BJ (cell line): ENCODE measurements at regions of chr2 and their contacts with region 1.

Region 1: GRCh38 chr2:176096986-176097819 is 2.4 kb upstream of the HOXD12 start:
- DNase-seq: no peak
- H3K4me3 ChIP-seq: peak overlapping the region; percentile 52
- H3K27me3 ChIP-seq: peaks cover 27% of the 10 kb centered on the region
- CTCF ChIP-seq: peak; percentile 94

Region 2: GRCh38 chr2:175251425-175252041 is 845.7 kb before region 1 on chr2:
- CTCF ChIA-PET with region 1: interaction called, 39 read pairs
- POLR2A ChIA-PET with region 1: no interaction called
- DNase-seq: no peak
- H3K4me3 ChIP-seq: no peak overlapping the region
- H3K27me3 ChIP-seq: peaks cover 7% of the 10 kb centered on the region
- CTCF ChIP-seq: peak; percentile 68

Region 3: GRCh38 chr2:175366815-175367214 is 730.4 kb before region 1 on chr2:
- CTCF ChIA-PET with region 1: interaction called, 43 read pairs
- POLR2A ChIA-PET with region 1: no interaction called
- DNase-seq: no peak
- H3K4me3 ChIP-seq: no peak overlapping the region
- H3K27me3 ChIP-seq: no peaks in the 10 kb centered on the region; the same call in 1 of the 2 replicates
- CTCF ChIP-seq: peak; percentile 82

Region 4: GRCh38 chr2:175844169-175844568 is 253.0 kb before region 1 on chr2:
- CTCF ChIA-PET with region 1: no interaction called
- POLR2A ChIA-PET with region 1: no interaction called
- DNase-seq: no peak
- H3K4me3 ChIP-seq: no peak overlapping the region
- H3K27me3 ChIP-seq: no peaks in the 10 kb centered on the region
- CTCF ChIP-seq: no peak

Region 5: DNA sequence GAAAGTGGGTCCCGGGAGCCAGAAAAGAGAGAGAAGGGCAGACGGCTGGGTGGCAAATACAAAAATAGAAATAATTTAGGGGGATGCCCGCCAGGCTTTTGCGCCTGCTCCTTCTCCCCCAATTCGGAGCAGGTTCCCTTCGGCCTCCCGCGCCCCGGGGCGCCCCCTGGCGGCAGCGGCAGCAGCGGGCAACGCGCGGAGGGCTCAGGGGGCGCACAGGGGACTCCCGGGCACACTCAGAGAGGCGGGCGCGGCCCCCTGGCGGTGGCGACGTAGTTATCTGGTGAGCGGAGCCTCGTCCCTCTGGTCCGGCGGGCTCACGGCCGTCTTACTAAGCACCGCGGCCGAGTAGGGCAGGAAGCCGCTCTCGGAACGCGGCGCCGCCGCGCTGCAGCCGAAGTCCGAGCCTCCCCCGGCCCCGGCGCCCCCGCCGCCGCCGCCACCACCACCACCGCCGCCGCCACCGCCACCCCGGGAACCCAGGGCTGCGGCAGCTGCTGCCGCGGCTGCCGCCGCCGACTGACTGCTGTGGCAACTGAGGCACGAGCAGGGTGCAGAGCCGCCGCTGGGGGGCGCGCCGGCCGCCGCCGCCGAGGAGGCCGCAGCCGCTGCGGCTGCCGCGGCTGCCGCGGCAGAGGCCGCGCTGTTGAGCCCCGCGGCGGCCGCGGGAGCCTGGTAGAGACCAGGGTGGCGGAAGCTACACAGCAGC is 17.2 kb before region 1 on chr2:
- CTCF ChIA-PET with region 1: interaction called, 24 read pairs
- POLR2A ChIA-PET with region 1: no interaction called
- DNase-seq: no peak
- H3K4me3 ChIP-seq: peak overlapping the region; percentile 23
- H3K27me3 ChIP-seq: peaks cover 49% of the 10 kb centered on the region
- CTCF ChIP-seq: peak; percentile 63

Region 6: DNA sequence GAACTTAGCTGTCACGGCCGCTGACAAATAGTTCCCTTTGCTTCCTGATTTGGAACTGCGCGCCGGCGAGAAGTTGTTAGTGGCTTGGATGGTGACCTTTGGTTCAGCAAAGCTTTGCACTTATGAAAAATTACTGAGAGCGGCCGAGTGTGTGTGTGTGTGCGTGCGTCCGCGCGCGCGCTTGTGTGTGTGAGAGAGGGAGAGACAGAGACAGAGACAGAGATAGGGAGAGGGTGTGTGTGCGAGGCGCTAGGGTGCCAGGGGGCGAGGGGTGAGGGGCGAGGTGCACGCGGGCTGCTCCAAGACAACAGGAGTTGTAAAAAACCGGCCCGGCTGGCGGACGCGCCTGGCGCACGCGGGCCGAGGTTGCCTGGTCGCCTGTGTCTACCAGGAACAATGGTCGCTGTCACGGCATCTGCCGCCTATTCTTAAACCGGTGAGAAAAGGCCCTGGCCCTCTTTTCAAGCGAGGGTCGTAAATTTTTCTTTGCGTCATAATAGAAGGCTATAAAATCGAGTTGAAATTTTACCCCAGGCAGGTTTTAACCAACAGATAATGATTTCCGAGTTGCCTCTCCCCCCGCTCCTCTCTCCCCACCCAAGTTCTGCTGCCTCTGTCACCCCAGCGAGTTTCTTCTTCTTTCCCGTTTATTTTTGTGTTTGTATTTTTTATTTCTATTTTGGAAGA is 60.4 kb after region 1 on chr2:
- CTCF ChIA-PET with region 1: no interaction called
- POLR2A ChIA-PET with region 1: no interaction called
- DNase-seq: no peak
- H3K4me3 ChIP-seq: no peak overlapping the region
- H3K27me3 ChIP-seq: peaks cover 54% of the 10 kb centered on the region
- CTCF ChIP-seq: no peak